ENCODE measurements at regions of chrX and their contacts with region 1.

Region 1: DNA sequence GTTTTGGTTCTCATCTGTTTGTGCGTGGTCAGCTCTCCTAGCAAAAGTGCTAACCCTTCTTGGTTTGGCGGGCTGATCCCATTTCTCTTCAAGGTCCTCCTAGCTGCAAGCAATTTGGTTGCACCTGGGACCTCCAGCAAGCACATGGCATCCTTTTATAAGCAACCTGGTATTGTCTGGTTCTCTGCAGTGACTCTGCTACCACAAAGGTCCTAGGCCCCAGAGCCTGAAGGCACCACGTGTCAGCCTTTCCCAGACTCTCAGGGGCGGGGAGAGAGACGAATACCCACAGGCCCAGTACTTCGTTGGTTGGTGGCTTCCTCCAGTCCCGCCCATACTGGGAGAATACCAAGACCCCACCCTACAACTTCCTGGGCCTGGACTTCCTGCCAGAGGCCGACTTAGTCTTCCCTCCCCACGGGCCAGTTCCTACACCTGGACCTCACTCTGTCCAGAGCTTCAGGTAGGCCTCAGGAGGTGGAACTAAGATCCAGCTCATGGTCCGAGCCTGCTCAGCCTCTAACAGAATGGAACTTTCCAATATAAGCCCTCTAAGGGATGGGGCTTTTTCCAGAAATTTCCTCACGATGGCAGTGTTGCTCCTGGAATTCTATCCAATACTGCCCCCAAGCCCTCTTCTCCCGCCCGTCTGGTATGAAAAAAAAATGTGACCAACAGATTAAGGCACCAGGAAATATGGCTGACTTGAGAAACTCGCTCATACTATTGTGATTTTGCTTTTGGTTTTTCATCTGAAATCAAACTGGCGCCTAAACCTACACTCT is 192.5 kb upstream of the STK26 start:
- DNase-seq: peak; percentile 81
- H3K4me3 Mint-ChIP-seq: peak overlapping the region; percentile 85
- H3K27ac Mint-ChIP-seq: peak overlapping the region; percentile 91
- H3K4me1 Mint-ChIP-seq: peaks cover 33% of the 10 kb centered on the region
- H3K27me3 Mint-ChIP-seq: no peaks in the 10 kb centered on the region

Region 2: DNA sequence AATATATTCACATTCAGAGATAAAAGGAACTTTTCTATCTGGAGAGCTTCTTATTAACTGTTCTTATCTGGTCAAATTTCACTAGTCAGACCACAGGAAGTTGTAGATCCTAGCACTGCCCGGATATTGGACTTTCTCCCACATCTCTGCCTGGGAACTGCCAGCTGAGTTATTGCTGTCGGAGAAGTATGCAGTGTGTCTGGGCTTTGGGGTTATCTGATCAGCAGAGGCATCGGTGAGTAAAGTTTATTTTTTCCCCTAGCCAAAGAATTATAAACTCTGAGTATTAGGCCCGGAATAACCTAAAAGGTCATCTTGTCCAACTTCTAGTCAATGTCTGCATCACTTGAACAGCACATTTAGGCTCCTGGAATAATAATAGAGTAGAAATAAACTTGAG is 241.6 kb before region 1 on chrX:
- CTCF ChIA-PET with region 1: no interaction called
- POLR2A ChIA-PET with region 1: no interaction called
- intact Hi-C with region 1: no loop called
- DNase-seq: no peak
- H3K4me3 Mint-ChIP-seq: no peak overlapping the region
- H3K27ac Mint-ChIP-seq: no peak overlapping the region
- H3K4me1 Mint-ChIP-seq: no peaks in the 10 kb centered on the region
- H3K27me3 Mint-ChIP-seq: no peaks in the 10 kb centered on the region

Region 3: DNA sequence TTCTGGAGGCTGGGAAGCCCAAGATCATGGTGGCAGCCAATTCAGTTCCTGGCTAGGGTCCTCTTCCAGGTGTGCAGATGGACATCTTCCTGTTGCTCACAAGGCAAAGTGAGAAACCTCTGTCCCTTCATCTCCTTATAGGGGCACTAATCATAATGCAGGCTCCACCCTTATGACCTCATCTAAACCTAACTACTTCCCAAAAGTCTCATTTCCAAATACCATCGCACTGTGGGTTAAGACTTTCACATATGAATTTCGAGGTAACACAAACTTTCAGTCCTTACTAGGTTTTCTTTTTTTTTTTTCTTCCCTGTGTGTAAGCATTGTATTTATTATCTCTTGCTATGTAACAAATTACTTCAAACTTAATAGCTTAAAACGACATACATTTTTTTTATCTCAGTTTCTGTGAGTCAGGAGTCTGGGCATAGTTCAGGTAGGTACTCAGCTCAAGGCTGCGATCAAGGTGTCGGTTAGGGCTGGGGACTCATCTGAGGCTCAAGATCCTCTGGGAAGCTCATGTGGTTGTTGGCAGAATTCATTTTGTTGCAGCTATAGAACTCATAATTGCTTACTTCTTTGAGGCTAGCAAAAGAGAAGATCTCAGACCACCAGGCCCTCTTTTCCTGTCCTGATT is 12.2 kb before region 1 on chrX:
- CTCF ChIA-PET with region 1: interaction called, 14 read pairs
- POLR2A ChIA-PET with region 1: no interaction called
- intact Hi-C with region 1: loop called (anchors 1 kb)
- DNase-seq: no peak
- H3K4me3 Mint-ChIP-seq: peak overlapping the region; percentile 4
- H3K27ac Mint-ChIP-seq: peak overlapping the region; percentile 51
- H3K4me1 Mint-ChIP-seq: peaks cover 33% of the 10 kb centered on the region
- H3K27me3 Mint-ChIP-seq: no peaks in the 10 kb centered on the region

Region 4: GRCh38 chrX:131874300-131874699 is 43.7 kb after region 1 on chrX:
- CTCF ChIA-PET with region 1: no interaction called
- POLR2A ChIA-PET with region 1: no interaction called
- intact Hi-C with region 1: no loop called
- DNase-seq: no peak
- H3K4me3 Mint-ChIP-seq: no peak overlapping the region
- H3K27ac Mint-ChIP-seq: no peak overlapping the region
- H3K4me1 Mint-ChIP-seq: no peaks in the 10 kb centered on the region
- H3K27me3 Mint-ChIP-seq: no peaks in the 10 kb centered on the region

Region 5: GRCh38 chrX:131918839-131919238 is 88.2 kb after region 1 on chrX:
- CTCF ChIA-PET with region 1: no interaction called
- POLR2A ChIA-PET with region 1: no interaction called
- intact Hi-C with region 1: no loop called
- DNase-seq: peak; percentile 21
- H3K4me3 Mint-ChIP-seq: no peak overlapping the region
- H3K27ac Mint-ChIP-seq: no peak overlapping the region
- H3K4me1 Mint-ChIP-seq: peaks cover 2% of the 10 kb centered on the region
- H3K27me3 Mint-ChIP-seq: peaks cover 2% of the 10 kb centered on the region

Region 6: DNA sequence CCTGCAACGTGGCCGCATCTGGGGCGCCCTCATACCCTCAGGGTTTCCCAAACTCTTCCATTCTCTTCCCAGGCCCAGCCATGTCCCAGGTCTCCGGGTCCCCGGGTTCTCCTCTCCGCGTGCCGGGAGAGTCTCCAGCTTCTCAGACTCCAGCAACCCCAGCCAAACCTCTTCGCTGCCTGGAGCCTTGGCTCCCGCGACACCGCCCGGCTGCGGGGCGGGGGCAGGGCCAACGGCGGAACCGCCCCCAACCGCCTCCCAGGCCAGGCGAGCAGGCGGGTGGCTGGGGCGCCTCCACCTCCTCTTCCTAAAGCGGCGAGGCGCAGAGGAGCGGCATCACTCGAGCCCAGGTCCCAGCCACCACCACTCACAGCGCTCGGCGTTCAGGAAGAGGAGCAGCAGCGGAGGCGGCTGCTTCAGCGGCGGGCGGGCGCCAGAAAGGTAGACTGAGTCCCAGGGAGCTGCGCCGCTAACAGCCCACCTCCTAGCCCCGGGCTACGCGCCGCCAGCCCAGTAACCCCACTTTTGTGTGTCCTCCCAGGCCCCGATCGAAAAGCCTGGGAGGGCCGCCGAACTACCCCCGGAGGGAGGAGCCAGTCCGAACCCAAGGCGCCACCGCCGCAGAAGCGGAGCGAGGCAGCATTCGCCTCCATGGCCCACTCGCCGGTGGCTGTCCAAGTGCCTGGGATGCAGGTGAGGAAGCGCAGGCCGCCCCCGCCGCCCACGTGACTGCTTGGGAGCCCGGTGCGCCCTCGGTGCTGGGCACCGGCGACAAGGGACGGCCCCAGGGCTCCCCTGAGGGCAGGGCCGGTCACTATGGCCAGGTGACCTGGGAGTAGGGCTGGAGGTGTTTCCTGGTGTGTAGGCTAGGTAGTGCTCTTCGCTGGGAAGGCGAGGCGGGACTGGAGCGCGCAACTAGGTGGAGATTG is 192.6 kb after region 1 on chrX and contains the start of gene STK26:
- CTCF ChIA-PET with region 1: interaction called, 7 read pairs
- POLR2A ChIA-PET with region 1: interaction called, 3 read pairs
- intact Hi-C with region 1: loop called (anchors 5 kb)
- DNase-seq: peak; percentile 84
- H3K4me3 Mint-ChIP-seq: peak within 1 kb of the TSS; percentile 85
- H3K27ac Mint-ChIP-seq: peak within 1 kb of the TSS; percentile 94
- H3K4me1 Mint-ChIP-seq: peaks cover 29% of the 10 kb centered on the region
- H3K27me3 Mint-ChIP-seq: no peaks in the 10 kb centered on the region
- total RNA-seq, gene STK26: 60.9 to 64.0 TPM

Region 7: GRCh38 chrX:132063856-132064255 is 233.3 kb after region 1 on chrX:
- CTCF ChIA-PET with region 1: no interaction called
- POLR2A ChIA-PET with region 1: no interaction called
- intact Hi-C with region 1: no loop called
- DNase-seq: no peak
- H3K4me3 Mint-ChIP-seq: no peak overlapping the region
- H3K27ac Mint-ChIP-seq: no peak overlapping the region
- H3K4me1 Mint-ChIP-seq: peaks cover 7% of the 10 kb centered on the region
- H3K27me3 Mint-ChIP-seq: no peaks in the 10 kb centered on the region

Region 8: DNA sequence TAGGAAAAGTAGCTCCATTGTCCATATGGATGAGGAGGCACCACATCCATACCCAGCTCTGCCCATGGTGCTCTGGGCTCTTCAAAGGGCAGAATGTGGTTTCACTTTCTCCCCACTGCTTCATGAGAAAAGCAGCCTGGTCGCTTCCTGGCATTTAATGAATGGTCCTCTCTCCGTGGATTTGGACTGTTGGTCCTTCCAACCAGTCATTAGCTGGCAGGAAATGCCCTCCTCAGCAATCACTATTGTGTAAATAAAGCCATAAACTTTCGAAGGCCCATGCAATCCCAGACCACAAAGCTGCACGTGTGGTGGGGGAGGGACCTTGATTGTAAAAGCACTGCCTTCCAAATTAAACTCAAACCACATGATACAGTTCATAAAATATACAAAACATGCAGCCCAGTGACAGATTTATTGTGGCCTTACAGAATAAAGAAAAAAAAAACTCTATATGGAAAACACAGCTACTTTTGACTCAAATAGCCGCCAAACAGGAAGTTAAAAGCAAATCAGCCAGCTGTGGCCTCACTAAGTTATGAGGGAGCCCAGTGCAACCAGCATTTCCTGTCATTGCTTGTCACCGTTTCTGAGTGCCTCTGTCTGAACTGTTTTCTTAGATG is 650.1 kb after region 1 on chrX:
- CTCF ChIA-PET with region 1: no interaction called
- POLR2A ChIA-PET with region 1: no interaction called
- intact Hi-C with region 1: loop called (anchors 2 kb)
- DNase-seq: peak; percentile 55
- H3K4me3 Mint-ChIP-seq: peak overlapping the region; percentile 75
- H3K27ac Mint-ChIP-seq: peak overlapping the region; percentile 97
- H3K4me1 Mint-ChIP-seq: peaks cover 37% of the 10 kb centered on the region
- H3K27me3 Mint-ChIP-seq: no peaks in the 10 kb centered on the region

Region 9: DNA sequence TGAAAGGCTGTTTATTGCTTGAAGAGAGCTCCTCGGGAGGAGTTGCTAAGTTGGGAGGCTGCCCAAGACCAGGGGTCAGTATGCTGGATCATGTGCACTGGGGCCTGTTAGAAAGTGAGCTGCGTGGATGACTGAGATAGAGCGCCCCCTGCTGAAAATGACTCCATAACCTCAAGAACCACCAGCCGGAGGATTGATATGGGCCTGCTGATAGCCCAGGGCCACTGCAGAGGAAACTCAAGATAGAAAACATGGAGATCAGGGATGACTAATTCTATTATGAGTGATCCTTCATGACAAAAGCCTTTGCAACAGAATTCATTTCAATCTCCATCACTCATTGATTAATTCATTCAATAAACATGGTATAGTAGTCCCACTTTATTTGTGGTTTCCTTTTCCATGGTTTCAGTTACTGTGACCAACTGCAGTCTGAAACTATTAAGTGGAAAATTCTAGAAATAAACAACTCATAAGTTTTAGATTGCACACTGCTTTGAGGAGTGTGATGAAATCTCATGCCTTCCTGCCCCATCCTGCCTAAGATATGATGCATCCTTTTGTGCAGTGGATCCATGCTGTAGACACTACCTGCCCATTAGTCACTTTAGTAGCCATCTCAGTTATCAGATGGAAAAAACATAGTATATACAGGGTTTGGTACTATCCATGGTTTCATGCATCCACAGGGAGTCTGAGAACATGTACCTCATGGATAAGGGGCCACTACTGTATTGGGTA is 785.0 kb after region 1 on chrX:
- CTCF ChIA-PET with region 1: interaction called, 4 read pairs
- POLR2A ChIA-PET with region 1: no interaction called
- intact Hi-C with region 1: loop called (anchors 1 kb)
- DNase-seq: peak; percentile 57
- H3K4me3 Mint-ChIP-seq: no peak overlapping the region
- H3K27ac Mint-ChIP-seq: no peak overlapping the region
- H3K4me1 Mint-ChIP-seq: no peaks in the 10 kb centered on the region
- H3K27me3 Mint-ChIP-seq: no peaks in the 10 kb centered on the region

Measured in activated CD4-positive, alpha-beta memory T cell treated with anti-CD3 and anti-CD28 coated beads for 36 hours (primary cell).